ENCODE measurements at regions of chr7 and their contacts with region 1.

Region 1: DNA sequence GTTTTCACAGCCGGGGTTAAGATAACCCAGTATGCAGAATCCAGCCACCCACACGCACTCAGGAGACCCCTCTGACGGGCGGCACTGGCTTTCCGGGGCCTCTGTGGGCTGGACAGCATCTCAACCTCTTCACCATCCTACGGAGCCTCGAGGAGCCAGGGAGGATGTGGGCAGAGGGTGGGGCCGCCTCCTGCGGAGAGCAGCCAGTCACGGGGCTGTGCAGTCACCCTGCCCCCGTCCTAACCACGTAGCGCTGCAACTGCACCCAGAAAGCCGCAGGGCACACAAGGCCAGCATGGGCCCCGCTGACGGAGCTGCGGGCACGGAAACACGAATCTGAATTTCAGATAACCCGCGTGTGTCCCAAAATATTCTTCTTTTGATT is 270.3 kb downstream of the ELFN1 start:
- DNase-seq: peak; percentile 97
- H3K4me3 Mint-ChIP-seq: peak overlapping the region; percentile 85
- H3K27ac Mint-ChIP-seq: peak overlapping the region; percentile 93
- H3K4me1 Mint-ChIP-seq: peaks cover 59% of the 10 kb centered on the region
- H3K27me3 Mint-ChIP-seq: no peaks in the 10 kb centered on the region

Region 2: GRCh38 chr7:1919539-1920265 is 20.7 kb before region 1 on chr7:
- intact Hi-C with region 1: loop called (anchors 1 kb)
- DNase-seq: no peak
- H3K4me3 Mint-ChIP-seq: peak overlapping the region; percentile 82
- H3K27ac Mint-ChIP-seq: no peak overlapping the region
- H3K4me1 Mint-ChIP-seq: peaks cover 42% of the 10 kb centered on the region
- H3K27me3 Mint-ChIP-seq: peaks cover 22% of the 10 kb centered on the region

Region 3: GRCh38 chr7:1925973-1926907 is 14.2 kb before region 1 on chr7:
- intact Hi-C with region 1: loop called (anchors 1 kb)
- DNase-seq: peak; percentile 79
- H3K4me3 Mint-ChIP-seq: peak overlapping the region; percentile 67
- H3K27ac Mint-ChIP-seq: peak overlapping the region; percentile 18
- H3K4me1 Mint-ChIP-seq: peaks cover 55% of the 10 kb centered on the region
- H3K27me3 Mint-ChIP-seq: peaks cover 21% of the 10 kb centered on the region

Region 4: GRCh38 chr7:1961701-1962276 is 21.4 kb after region 1 on chr7:
- intact Hi-C with region 1: loop called (anchors 1 kb)
- DNase-seq: peak; percentile 79
- H3K4me3 Mint-ChIP-seq: peak overlapping the region; percentile 21
- H3K27ac Mint-ChIP-seq: peak overlapping the region; percentile 84
- H3K4me1 Mint-ChIP-seq: peaks cover 9% of the 10 kb centered on the region
- H3K27me3 Mint-ChIP-seq: peaks cover 6% of the 10 kb centered on the region

Region 5: GRCh38 chr7:2037808-2038522 is 97.6 kb after region 1 on chr7:
- intact Hi-C with region 1: loop called (anchors 5 kb)
- DNase-seq: peak; percentile 79
- H3K4me3 Mint-ChIP-seq: peak overlapping the region; percentile 86
- H3K27ac Mint-ChIP-seq: peak overlapping the region; percentile 73
- H3K4me1 Mint-ChIP-seq: peaks cover 44% of the 10 kb centered on the region
- H3K27me3 Mint-ChIP-seq: peaks cover 3% of the 10 kb centered on the region

Region 6: DNA sequence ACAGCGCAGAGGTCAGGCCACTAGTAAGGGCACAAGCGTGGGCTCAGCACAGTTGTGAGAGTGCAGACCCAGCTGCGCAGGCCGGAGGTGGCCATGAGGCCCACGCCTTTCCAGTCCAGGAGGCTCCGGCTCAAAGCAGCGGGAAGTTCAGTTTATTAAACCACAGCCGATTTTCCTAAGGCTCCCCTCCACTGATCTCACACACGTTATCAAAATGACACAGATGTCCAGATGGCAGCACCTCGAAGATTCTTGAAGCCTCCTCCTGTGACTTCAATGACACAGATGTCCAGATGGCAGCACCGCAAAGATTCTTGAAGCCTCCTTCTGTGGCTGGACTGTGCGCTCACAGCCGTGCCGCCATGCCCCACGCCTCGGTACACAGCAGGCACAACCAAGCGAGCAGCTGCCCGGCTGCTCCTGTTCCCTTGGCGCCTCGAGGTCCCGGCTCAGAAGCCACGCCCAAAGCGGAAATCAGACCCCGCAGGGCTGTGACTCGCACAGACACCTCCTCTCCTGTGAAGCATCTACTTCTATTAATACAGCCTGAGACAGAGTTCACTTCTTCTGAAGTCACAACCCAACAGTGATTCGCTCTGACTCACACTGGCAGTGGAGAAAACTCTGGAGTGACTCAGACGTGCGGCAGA is 169.7 kb after region 1 on chr7:
- intact Hi-C with region 1: loop called (anchors 5 kb)
- DNase-seq: peak; percentile 72
- H3K4me3 Mint-ChIP-seq: peak overlapping the region; percentile 25
- H3K27ac Mint-ChIP-seq: peak overlapping the region; percentile 69
- H3K4me1 Mint-ChIP-seq: peaks cover 23% of the 10 kb centered on the region
- H3K27me3 Mint-ChIP-seq: no peaks in the 10 kb centered on the region

Measured in activated CD4-positive, alpha-beta T cell treated with anti-CD3 and anti-CD28 coated beads, Interleukin-2, amount 10 ng/mL, durations not matched to agents 24 days and 14 days (primary cell).